Ovary (tissue), 10 donors: ENCODE measurements at regions of chr2 and their contacts with region 1.

Region 1: GRCh38 chr2:69717861-69718273 is 24.1 kb upstream of the ANXA4 start:
- DNase-seq: no peak
- H3K4me3 ChIP-seq: no peak overlapping the region
- H3K27ac ChIP-seq: no peak overlapping the region
- H3K4me1 ChIP-seq: no peaks in the 10 kb centered on the region
- H3K27me3 ChIP-seq: no peaks in the 10 kb centered on the region
- CTCF ChIP-seq: no peak
- EP300 ChIP-seq: no peak
- POLR2A ChIP-seq: no peak

Region 2: GRCh38 chr2:69565431-69565839 is 152.4 kb before region 1 on chr2:
- intact Hi-C with region 1: loop called in 1 of 4 experiments (anchors 10 kb)
- DNase-seq: peak; percentile 18 to 53 (median 44)
- H3K4me3 ChIP-seq: no peak overlapping the region
- H3K27ac ChIP-seq: no peak overlapping the region
- H3K4me1 ChIP-seq: peaks cover 4% of the 10 kb centered on the region
- H3K27me3 ChIP-seq: no peaks in the 10 kb centered on the region
- CTCF ChIP-seq: peak in 2 of 3 donors; percentile 7 to 22
- EP300 ChIP-seq: no peak
- POLR2A ChIP-seq: no peak

Region 3: GRCh38 chr2:69961496-69961895 is 243.6 kb after region 1 on chr2 and contains the start of gene ASPRV1:
- intact Hi-C with region 1: no loop called
- DNase-seq: no peak
- H3K4me3 ChIP-seq: no peak within 1 kb of the TSS
- H3K27ac ChIP-seq: no peak within 1 kb of the TSS
- H3K4me1 ChIP-seq: no peaks in the 10 kb centered on the region
- H3K27me3 ChIP-seq: no peaks in the 10 kb centered on the region
- CTCF ChIP-seq: no peak
- EP300 ChIP-seq: no peak
- POLR2A ChIP-seq: no peak
- total RNA-seq, gene ASPRV1: 2.1 to 5.5 (median 4.4) TPM